B cell (primary cell): ENCODE measurements at regions of chr10 and their contacts with region 1.

Region 1: GRCh38 chr10:14723052-14723689 is 51.5 kb downstream of the FAM107B start:
- DNase-seq: peak; percentile 41
- ATAC-seq: peak; percentile 51
- H3K4me3 ChIP-seq: peak overlapping the region in 1 of 5 experiments; percentile 12
- H3K4me3 Mint-ChIP-seq: peak overlapping the region; percentile 67
- H3K27ac ChIP-seq: peak overlapping the region; percentile 22 to 37
- H3K27ac Mint-ChIP-seq: peak overlapping the region; percentile 28
- H3K4me1 ChIP-seq: peaks cover 32 to 34% of the 10 kb centered on the region in 2 donors
- H3K4me1 Mint-ChIP-seq: peaks cover 43% of the 10 kb centered on the region
- H3K27me3 ChIP-seq: no peaks in the 10 kb centered on the region
- H3K27me3 Mint-ChIP-seq: no peaks in the 10 kb centered on the region
- CTCF ChIP-seq: no peak

Region 2: DNA sequence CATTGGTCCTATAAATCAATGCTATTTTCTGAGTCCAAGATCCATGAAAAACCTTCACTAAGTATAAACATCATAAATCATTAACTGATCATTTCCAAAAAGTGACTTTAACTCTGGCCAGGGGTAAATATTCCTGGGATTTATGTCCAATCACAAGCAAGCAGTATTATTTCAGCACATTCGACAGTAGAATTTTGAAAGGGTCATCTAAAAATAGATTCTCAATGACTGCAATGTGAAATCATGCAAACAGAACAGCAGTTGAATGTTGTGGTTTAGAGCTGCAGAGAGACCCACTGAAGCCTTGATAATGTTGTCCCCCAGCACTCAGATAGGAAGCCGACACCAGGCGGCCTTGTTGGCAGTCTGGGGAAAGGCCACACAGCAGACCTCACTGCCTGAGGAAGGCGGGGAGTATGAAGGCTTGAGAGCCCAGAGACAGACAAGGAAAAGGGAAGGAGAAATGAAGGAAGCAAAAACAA is 13.5 kb after region 1 on chr10:
- CTCF ChIA-PET with region 1: interaction called, 4 read pairs
- POLR2A ChIA-PET with region 1: interaction called, 3 read pairs
- intact Hi-C with region 1: loop called (anchors 1 kb)
- DNase-seq: peak; percentile 76
- ATAC-seq: peak; percentile 78
- H3K4me3 ChIP-seq: peak overlapping the region in 1 of 5 experiments; percentile 6
- H3K4me3 Mint-ChIP-seq: peak overlapping the region; percentile 73
- H3K27ac ChIP-seq: peak overlapping the region; percentile 84
- H3K27ac Mint-ChIP-seq: peak overlapping the region; percentile 95
- H3K4me1 ChIP-seq: peaks cover 64 to 70% of the 10 kb centered on the region in 2 donors
- H3K4me1 Mint-ChIP-seq: peaks cover 68% of the 10 kb centered on the region
- H3K27me3 ChIP-seq: no peaks in the 10 kb centered on the region
- H3K27me3 Mint-ChIP-seq: no peaks in the 10 kb centered on the region
- CTCF ChIP-seq: no peak